Activated CD4-positive, alpha-beta T cell treated with anti-CD3 and anti-CD28 coated beads for 36 hours (primary cell): ENCODE measurements at regions of chr21 and their contacts with region 1.

Region 1: DNA sequence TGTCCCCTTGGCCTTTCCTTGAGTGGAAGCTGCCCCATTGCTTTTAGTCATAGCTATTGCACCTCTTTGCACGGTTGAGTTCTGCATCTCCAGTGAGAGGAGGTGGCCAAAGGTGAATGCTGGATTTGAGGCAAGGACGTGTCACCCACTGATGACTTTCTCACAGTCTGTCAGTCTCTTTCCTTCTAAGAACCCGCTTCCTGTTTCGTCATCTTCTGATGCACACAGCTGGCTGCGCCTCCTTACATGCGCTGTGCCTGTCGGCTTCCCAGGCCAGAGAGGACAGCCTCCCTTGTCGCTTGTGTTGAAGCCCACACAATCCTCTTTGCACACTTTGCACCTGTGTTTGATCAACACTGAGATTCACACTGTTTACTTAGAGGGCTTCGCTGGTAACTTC is 41.8 kb upstream of the PWP2 start:
- DNase-seq: peak; percentile 88
- ATAC-seq: peak; percentile 94
- H3K4me3 Mint-ChIP-seq: peak overlapping the region; percentile 64
- H3K27ac Mint-ChIP-seq: peak overlapping the region; percentile 95
- H3K4me1 Mint-ChIP-seq: peaks cover 42% of the 10 kb centered on the region
- H3K27me3 Mint-ChIP-seq: no peaks in the 10 kb centered on the region

Region 2: DNA sequence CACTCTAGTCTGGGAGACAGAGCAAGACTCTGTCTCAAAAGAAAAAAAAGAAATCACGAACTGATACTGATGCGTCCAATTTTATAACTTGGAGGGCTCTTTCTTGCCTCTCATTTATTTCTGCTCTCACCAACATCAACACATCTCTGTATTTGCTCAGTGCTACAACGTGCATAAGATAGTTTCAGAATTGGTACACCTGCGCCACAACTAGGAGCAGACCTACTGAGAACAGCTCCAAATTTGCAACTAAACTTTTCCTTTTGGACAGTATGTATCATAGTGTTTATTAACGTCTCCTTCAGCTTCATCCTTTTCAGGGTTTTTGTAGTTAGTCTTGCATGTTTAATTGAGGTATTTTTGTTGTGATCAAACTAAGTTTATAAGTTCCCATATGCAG is 25.6 kb before region 1 on chr21:
- CTCF ChIA-PET with region 1: no interaction called
- POLR2A ChIA-PET with region 1: no interaction called
- intact Hi-C with region 1: loop called in 1 of 2 experiments (anchors 2 kb)
- DNase-seq: no peak
- ATAC-seq: peak; percentile 73
- H3K4me3 Mint-ChIP-seq: no peak overlapping the region
- H3K27ac Mint-ChIP-seq: no peak overlapping the region
- H3K4me1 Mint-ChIP-seq: peaks cover 16% of the 10 kb centered on the region
- H3K27me3 Mint-ChIP-seq: no peaks in the 10 kb centered on the region

Region 3: GRCh38 chr21:44083631-44084291 is 18.3 kb after region 1 on chr21:
- CTCF ChIA-PET with region 1: interaction called, 6 read pairs
- POLR2A ChIA-PET with region 1: interaction called, 3 read pairs
- intact Hi-C with region 1: loop called (anchors 1 to 2 kb)
- DNase-seq: peak; percentile 82
- ATAC-seq: peak; percentile 76
- H3K4me3 Mint-ChIP-seq: peak overlapping the region; percentile 55
- H3K27ac Mint-ChIP-seq: peak overlapping the region; percentile 98
- H3K4me1 Mint-ChIP-seq: peaks cover 85% of the 10 kb centered on the region
- H3K27me3 Mint-ChIP-seq: no peaks in the 10 kb centered on the region